ENCODE measurements at regions of chr5 and their contacts with region 1.

Region 1: DNA sequence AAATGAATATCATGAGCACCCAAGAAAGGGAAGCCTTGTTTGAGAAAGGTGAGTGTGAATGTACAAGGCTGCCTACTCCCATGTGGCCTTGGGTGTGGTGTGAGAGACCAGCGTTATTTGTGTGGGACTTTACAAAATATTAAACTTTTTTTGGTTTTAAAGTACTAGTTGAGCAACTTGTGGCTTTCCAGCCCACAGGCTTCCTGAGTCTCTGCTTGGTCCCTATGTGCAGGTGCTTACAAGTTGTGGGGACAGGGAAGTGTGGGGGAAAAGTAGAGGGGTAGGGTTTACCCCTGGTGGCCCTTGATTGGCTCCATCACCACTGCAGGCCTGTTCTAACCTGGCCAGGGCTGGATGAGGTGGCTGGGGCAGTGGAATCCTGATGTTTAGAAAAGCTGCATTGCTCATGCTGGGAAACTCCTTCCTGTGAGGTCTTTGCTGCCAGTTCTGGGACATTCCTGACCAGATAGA is 19.7 kb downstream of the PTTG1 start:
- DNase-seq: no peak
- H3K4me3 ChIP-seq: no peak overlapping the region
- H3K27ac ChIP-seq: no peak overlapping the region
- H3K4me1 ChIP-seq: peaks cover 0 to 5% (median 0%) of the 10 kb centered on the region in 3 donors
- H3K27me3 ChIP-seq: no peaks in the 10 kb centered on the region
- CTCF ChIP-seq: no peak

Region 2: DNA sequence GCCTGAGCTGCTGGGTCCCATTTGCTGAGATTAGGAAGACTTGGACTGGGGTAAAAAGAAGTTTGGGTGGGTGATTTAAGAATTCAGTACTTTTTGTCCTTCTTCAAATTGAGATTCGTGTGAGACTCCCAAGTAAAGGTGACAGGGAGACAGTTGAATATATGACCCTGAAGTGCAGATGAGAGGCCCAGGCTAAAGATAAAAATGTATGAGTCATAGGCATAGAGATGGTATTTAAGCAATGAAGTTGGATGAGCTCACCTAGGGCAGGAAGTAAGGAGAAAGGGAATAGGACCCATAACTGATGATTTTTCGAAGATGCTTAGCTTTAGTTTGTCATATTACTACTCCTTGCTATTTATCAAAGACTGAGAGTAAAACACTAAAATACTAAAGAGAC is 780.9 kb before region 1 on chr5:
- intact Hi-C with region 1: no loop called
- DNase-seq: no peak
- H3K4me3 ChIP-seq: no peak overlapping the region
- H3K27ac ChIP-seq: no peak overlapping the region
- H3K4me1 ChIP-seq: no peaks in the 10 kb centered on the region
- H3K27me3 ChIP-seq: no peaks in the 10 kb centered on the region
- CTCF ChIP-seq: no peak

Region 3: GRCh38 chr5:160230686-160231527 is 210.4 kb before region 1 on chr5:
- intact Hi-C with region 1: no loop called
- DNase-seq: no peak
- H3K4me3 ChIP-seq: no peak overlapping the region
- H3K27ac ChIP-seq: no peak overlapping the region
- H3K4me1 ChIP-seq: no peaks in the 10 kb centered on the region
- H3K27me3 ChIP-seq: no peaks in the 10 kb centered on the region
- CTCF ChIP-seq: no peak

Region 4: GRCh38 chr5:160508780-160509361 is 67.5 kb after region 1 on chr5:
- intact Hi-C with region 1: loop called (anchors 10 kb)
- DNase-seq: peak in 4 of 5 donors; percentile 67 to 88 (median 81)
- H3K4me3 ChIP-seq: no peak overlapping the region
- H3K27ac ChIP-seq: no peak overlapping the region
- H3K4me1 ChIP-seq: no peaks in the 10 kb centered on the region
- H3K27me3 ChIP-seq: no peaks in the 10 kb centered on the region
- CTCF ChIP-seq: peak; percentile 88

Measured in kidney (tissue), 22 donors.